PC-9 (cell line): ENCODE measurements at regions of chr11 and their contacts with region 1.

Region 1: DNA sequence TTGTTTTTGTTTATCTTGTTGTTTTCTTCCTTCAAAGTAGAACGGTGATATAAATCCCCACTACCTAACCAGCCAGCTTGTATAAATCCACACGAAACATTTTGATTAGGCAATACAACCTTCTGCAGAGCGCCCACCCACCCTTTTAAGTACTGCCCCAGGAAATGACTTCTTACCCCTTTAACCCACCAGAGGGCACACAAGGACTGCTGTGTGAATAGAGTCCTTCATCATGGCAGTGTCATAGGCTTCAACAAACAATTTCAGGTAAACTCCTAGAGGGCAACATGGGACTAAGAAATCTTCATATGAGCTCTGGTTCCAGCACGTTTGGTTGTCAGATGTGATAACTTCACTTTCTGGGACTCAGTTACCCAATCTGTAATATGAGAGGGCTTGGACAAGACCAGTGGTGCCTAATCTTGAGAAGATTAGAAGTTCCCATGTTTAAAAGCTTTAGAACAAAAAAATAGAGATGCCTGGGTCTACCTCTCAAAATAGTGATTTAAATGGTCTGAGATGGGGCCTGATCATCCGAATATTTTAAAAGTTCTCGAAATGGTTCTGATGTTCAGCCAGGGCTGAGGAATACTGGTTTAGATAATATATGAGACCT is 56.1 kb downstream of the PIWIL4 start:
- DNase-seq: peak; percentile 67 to 87
- H3K4me3 ChIP-seq: no peak overlapping the region
- H3K27ac ChIP-seq: 0 out of 2 replicates have a peak overlapping the region, but pooled peaks have one; percentile 12
- H3K4me1 ChIP-seq: peaks cover 5% of the 10 kb centered on the region; the same call in 1 of the 2 replicates
- H3K27me3 ChIP-seq: no peaks in the 10 kb centered on the region
- CTCF ChIP-seq: peak; percentile 99

Region 2: GRCh38 chr11:94602430-94603372 is 20.5 kb before region 1 on chr11:
- CTCF ChIA-PET with region 1: interaction called, 13 read pairs
- POLR2A ChIA-PET with region 1: no interaction called
- intact Hi-C with region 1: no loop called
- DNase-seq: peak; percentile 66 to 80
- H3K4me3 ChIP-seq: no peak overlapping the region
- H3K27ac ChIP-seq: peak overlapping the region; percentile 27; the same call in 1 of the 2 replicates
- H3K4me1 ChIP-seq: peaks cover 11% of the 10 kb centered on the region; the same call in 1 of the 2 replicates
- H3K27me3 ChIP-seq: no peaks in the 10 kb centered on the region
- CTCF ChIP-seq: peak; percentile 74

Region 3: DNA sequence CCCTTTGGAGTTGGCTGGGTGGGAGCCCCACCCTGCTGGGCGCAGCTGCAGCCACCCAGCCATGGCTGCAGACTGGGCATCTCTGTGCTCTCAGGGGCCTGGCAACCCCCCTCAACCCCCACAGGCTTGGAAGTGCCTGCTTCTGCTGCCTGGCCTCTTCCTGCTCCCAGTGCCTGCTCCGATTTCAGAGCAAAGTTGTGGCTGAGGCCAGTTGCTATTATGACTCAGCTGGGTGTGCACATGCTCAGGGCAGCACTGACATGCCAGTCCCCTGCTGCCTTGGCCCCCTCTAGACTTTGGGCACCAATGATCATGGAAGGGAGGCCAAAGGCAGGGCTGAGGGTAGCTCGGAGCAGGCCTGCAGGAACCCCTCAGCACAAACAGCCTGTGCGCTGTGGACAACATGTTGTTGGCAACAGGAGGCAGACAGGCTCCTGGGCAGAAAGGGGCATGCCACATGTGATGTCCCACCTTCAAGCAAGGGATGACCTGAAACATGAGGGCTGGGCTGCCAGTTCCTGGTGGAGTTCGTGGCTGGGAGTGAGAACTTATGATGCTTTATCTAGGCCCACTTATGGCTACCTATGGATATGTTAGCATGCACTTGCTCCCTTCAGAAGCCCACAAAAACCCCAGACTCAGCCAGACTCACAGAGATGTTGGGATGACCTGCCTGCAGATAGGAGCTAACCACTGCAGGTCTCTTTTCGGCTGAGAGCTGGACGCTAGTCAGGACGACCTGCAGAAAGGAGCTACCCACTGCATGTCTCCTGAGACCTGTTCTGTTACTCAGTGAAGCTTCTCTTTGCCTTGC is 48.5 kb after region 1 on chr11:
- CTCF ChIA-PET with region 1: no interaction called
- POLR2A ChIA-PET with region 1: no interaction called
- intact Hi-C with region 1: no loop called
- DNase-seq: no peak
- H3K4me3 ChIP-seq: no peak overlapping the region
- H3K27ac ChIP-seq: no peak overlapping the region
- H3K4me1 ChIP-seq: peaks cover 24% of the 10 kb centered on the region
- H3K27me3 ChIP-seq: no peaks in the 10 kb centered on the region
- CTCF ChIP-seq: no peak

Region 4: GRCh38 chr11:94741022-94741679 is 117.9 kb after region 1 on chr11:
- CTCF ChIA-PET with region 1: interaction called, 6 read pairs
- POLR2A ChIA-PET with region 1: interaction called, 10 read pairs
- intact Hi-C with region 1: loop called (anchors 1 kb)
- DNase-seq: peak in 1 of 2 experiments; percentile 79
- H3K4me3 ChIP-seq: peak overlapping the region; percentile 93
- H3K27ac ChIP-seq: peak overlapping the region; percentile 48
- H3K4me1 ChIP-seq: peaks cover 85% of the 10 kb centered on the region
- H3K27me3 ChIP-seq: no peaks in the 10 kb centered on the region
- CTCF ChIP-seq: peak; percentile 64

Region 5: GRCh38 chr11:94767761-94768601 is 144.8 kb after region 1 on chr11 and contains the start of gene AMOTL1:
- CTCF ChIA-PET with region 1: interaction called, 9 read pairs
- POLR2A ChIA-PET with region 1: no interaction called
- intact Hi-C with region 1: loop called (anchors 1 kb)
- DNase-seq: peak; percentile 92
- H3K4me3 ChIP-seq: peak within 1 kb of the TSS; percentile 95
- H3K27ac ChIP-seq: peak within 1 kb of the TSS; percentile 90
- H3K4me1 ChIP-seq: peaks cover 60% of the 10 kb centered on the region
- H3K27me3 ChIP-seq: no peaks in the 10 kb centered on the region
- CTCF ChIP-seq: no peak; the same call in 1 of the 2 replicates
- total RNA-seq, gene AMOTL1: 48.0 and 60.5 TPM in 2 replicates

Region 6: GRCh38 chr11:94897330-94897768 is 274.1 kb after region 1 on chr11:
- CTCF ChIA-PET with region 1: interaction called, 4 read pairs
- POLR2A ChIA-PET with region 1: interaction called, 7 read pairs
- intact Hi-C with region 1: loop called (anchors 1 kb)
- DNase-seq: peak in 1 of 2 experiments; percentile 39
- H3K4me3 ChIP-seq: no peak overlapping the region
- H3K27ac ChIP-seq: no peak overlapping the region
- H3K4me1 ChIP-seq: no peaks in the 10 kb centered on the region
- H3K27me3 ChIP-seq: no peaks in the 10 kb centered on the region
- CTCF ChIP-seq: peak; percentile 97

Region 7: DNA sequence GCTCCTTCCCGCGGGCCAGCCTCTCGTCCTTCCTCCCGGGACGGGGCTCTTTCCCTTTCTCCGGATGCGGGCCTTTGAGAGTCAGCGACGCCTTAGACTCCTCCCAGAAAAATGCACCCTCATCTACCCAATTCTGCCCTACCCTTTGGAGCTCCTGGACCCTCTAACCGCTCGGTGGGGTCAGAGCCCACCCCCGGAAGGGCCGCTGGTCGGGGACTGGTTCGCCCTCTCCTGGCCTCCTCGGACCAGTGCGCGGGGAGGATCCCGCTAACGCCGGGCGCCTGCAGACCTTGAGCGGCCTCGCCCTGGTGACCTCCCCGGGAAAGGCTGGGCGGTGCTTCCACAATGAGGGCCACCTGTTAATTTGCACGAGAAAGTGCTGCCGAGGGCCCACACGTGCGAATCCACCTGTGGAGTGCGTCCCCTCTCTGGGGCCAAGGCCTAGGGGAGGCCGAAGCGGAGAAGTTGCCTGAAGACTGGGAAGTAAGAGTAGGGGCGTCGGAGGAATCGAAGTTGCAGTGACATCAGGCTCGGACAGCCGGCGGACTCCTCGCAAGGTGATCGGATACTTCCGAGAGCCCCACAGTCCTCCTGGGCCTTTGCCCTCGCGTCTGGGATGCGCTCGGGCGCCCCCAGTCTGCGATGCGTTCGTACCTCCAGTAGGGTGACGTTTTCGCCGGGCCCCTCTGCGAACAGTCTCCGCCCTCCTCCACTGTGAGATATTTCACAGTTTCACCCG is 527.9 kb after region 1 on chr11:
- CTCF ChIA-PET with region 1: no interaction called
- POLR2A ChIA-PET with region 1: no interaction called
- intact Hi-C with region 1: loop called (anchors 1 kb)
- DNase-seq: peak; percentile 93 to 94
- H3K4me3 ChIP-seq: peak overlapping the region; percentile 67
- H3K27ac ChIP-seq: peak overlapping the region; percentile 60
- H3K4me1 ChIP-seq: peaks cover 31% of the 10 kb centered on the region
- H3K27me3 ChIP-seq: no peaks in the 10 kb centered on the region
- CTCF ChIP-seq: no peak; the same call in 1 of the 2 replicates